ENCODE measurements at regions of chr12 and their contacts with region 1.

Region 1: DNA sequence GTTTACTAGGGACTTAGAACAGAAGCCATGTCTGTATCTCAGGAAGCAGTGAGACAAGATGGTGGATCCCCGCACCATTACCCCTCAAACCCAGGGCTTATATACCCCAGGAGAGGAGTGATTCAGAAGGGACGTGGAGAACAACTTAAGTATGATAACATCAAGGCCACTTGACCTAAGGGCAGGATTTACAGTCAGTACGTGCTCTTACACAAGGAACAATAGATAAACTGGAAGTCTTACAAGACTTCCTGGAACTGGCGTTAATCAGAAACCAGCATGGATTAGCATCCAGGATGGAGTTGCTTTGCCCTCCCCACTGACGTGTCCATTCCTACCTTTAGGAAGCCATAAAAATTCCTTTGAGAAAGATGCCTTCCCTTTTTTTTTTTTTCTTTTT is 8.6 kb upstream of the ETFBKMT start:
- DNase-seq: no peak
- H3K4me3 ChIP-seq: no peak overlapping the region
- H3K27ac ChIP-seq: no peak overlapping the region
- H3K27me3 ChIP-seq: no peaks in the 10 kb centered on the region
- CTCF ChIP-seq: no peak

Region 2: DNA sequence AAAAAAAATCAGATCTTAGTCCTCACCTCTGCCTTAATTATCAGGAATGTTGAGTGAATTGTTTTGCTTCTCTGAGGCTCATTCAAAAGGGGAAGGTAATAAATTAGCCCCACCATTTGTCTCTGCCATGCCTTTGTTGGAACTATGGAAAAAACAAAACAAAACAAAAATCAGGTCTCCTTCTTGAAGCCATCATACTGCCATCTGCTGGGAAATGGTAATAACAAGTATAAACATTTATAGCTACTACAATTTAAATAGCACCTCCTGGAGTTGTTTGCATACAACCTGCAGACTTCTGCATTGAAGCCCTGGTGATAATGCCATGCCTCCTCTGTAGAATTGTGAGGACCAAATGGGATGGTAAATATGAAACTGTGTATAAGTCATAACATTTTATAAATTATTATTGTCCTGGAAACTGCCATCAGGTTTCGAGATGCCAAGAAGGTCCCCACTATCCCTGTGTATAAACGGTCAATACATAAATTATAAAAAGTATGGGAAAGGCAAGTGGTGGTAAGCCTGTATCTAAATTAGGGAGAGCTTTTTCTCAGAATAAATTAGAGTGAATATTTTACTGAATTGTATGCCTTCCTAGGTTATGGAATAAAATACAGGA is 661.2 kb after region 1 on chr12:
- intact Hi-C with region 1: loop called in 1 of 2 experiments (anchors 5 kb)
- DNase-seq: no peak
- H3K4me3 ChIP-seq: no peak overlapping the region
- H3K27ac ChIP-seq: peak overlapping the region in 1 of 59 donors; percentile 22
- H3K27me3 ChIP-seq: no peaks in the 10 kb centered on the region
- CTCF ChIP-seq: peak; percentile 19 to 79 (median 61)

Measured in dorsolateral prefrontal cortex (tissue), 120 donors.